ENCODE measurements at regions of chr6 and their contacts with region 1.

Region 1: DNA sequence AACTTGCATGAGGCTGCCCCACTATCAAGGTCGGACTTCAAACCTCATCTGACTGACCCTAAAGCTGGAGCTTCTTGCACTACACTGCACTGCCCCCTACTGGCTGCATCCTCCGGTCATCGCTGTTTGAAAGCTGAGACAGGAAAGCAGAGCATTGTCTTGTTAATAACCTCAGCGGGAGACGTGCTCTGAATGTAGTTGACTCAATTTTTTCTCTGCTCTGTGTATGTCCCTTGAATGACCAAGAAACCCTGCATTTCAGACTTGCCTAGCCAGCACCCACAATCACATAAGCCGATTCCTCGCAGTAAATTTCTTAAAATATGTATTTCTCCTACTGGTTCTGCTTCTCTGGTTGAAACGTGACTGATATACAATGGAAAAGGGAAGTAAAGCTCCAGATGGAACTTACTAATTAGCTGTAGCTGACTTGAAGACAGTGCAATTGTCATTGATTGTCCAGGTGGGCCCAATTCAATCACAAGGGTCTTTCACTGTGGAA is 27.8 kb downstream of the TCF21 start:
- DNase-seq: peak; percentile 91
- H3K4me3 Mint-ChIP-seq: no peak overlapping the region
- H3K27ac Mint-ChIP-seq: no peak overlapping the region
- H3K4me1 Mint-ChIP-seq: peaks cover 3% of the 10 kb centered on the region
- H3K27me3 Mint-ChIP-seq: peaks cover 29% of the 10 kb centered on the region

Region 2: DNA sequence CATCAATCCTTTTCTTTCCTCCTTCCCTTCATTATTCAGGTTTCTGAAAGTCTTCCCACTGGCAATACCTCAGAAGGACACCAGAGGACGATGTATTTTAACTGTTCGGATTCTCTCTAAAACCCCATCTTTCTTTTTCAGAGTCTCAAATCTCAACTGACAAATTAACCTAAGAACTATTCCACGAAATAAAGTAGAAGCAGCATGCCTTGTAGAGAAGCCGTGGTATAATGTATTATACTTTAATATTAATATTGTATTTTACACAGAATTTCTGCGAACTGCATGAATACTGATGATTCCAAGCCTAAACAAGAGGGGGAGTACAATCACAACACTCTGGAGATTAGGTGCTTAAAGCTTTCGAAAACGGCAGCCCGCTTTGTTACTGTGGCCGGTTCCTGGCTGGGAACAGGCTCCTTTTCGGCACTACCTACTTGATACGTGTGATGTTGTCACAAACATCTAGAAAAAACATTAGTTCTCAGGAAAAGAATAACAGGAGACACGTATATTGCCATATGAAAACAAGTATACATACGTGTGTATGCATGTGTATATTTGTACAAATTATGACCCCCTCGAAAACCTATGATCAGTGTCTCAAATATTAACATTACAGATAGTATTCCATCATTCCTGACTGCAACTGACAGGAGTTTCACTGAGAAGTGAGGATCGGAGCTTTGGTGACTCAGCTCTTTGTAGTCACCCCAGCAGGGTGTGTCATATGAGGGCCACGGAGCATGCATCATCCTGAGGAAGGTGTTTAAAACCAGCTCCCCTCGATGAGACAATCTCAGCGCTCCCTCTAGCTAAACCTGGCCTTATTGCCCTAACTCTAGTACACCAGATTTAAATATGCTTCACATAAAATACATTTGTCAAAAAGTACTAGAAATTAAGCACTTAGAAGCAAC is 347.5 kb before region 1 on chr6:
- intact Hi-C with region 1: loop called (anchors 1 kb)
- DNase-seq: peak; percentile 78
- H3K4me3 Mint-ChIP-seq: peak overlapping the region; percentile 74
- H3K27ac Mint-ChIP-seq: no peak overlapping the region
- H3K4me1 Mint-ChIP-seq: peaks cover 6% of the 10 kb centered on the region
- H3K27me3 Mint-ChIP-seq: peaks cover 14% of the 10 kb centered on the region

Region 3: DNA sequence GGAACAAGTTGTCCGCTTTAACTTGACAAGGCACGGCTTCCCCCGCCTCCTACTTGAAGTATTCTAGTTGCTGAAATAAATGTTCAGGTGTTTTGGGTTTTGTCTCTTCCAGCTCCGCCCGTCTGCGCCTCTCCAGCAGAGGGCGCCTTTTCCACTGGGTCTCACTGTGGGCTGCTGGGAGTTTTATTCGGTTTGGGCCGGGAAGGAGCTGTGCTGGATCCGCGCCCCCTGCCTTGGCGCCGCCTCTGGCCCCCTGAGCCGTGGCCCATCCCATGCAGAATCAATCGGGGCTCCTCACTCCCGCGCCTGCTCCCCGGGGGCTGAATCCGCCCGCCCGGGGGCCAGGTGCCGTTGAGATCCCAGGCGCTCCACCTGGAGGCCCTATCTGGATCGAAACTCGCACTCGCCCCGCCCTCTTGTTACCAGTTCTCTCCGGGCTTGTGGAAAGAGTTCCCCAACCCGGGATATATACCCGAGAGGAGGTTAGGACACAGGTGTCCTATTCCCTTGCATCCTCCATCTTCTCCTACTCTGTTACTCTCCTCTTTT is 78.8 kb before region 1 on chr6:
- intact Hi-C with region 1: loop called (anchors 1 kb)
- DNase-seq: peak; percentile 89
- H3K4me3 Mint-ChIP-seq: peak overlapping the region; percentile 75
- H3K27ac Mint-ChIP-seq: no peak overlapping the region
- H3K4me1 Mint-ChIP-seq: peaks cover 6% of the 10 kb centered on the region
- H3K27me3 Mint-ChIP-seq: peaks cover 24% of the 10 kb centered on the region